A673 (cell line): ENCODE measurements at regions of chr2 and their contacts with region 1.

Region 1: GRCh38 chr2:636641-637405 is 40.4 kb downstream of the TMEM18 start:
- DNase-seq: peak; percentile 79
- H3K4me3 ChIP-seq: no peak overlapping the region
- H3K27ac ChIP-seq: no peak overlapping the region
- H3K4me1 ChIP-seq: no peaks in the 10 kb centered on the region
- H3K27me3 ChIP-seq: no peaks in the 10 kb centered on the region
- CTCF ChIP-seq: peak; percentile 85

Region 2: GRCh38 chr2:246489-247144 is 390.2 kb before region 1 on chr2:
- CTCF ChIA-PET with region 1: no interaction called
- POLR2A ChIA-PET with region 1: no interaction called
- intact Hi-C with region 1: loop called (anchors 1 kb)
- DNase-seq: peak; percentile 77
- H3K4me3 ChIP-seq: no peak overlapping the region
- H3K27ac ChIP-seq: no peak overlapping the region
- H3K4me1 ChIP-seq: no peaks in the 10 kb centered on the region
- H3K27me3 ChIP-seq: no peaks in the 10 kb centered on the region
- CTCF ChIP-seq: peak; percentile 71

Region 3: GRCh38 chr2:529425-529824 is 107.4 kb before region 1 on chr2:
- CTCF ChIA-PET with region 1: no interaction called
- POLR2A ChIA-PET with region 1: no interaction called
- intact Hi-C with region 1: loop called (anchors 1 kb)
- DNase-seq: peak; percentile 61
- H3K4me3 ChIP-seq: no peak overlapping the region
- H3K27ac ChIP-seq: no peak overlapping the region
- H3K4me1 ChIP-seq: no peaks in the 10 kb centered on the region
- H3K27me3 ChIP-seq: no peaks in the 10 kb centered on the region
- CTCF ChIP-seq: peak; percentile 55